Activated CD4-positive, alpha-beta T cell treated with anti-CD3 and anti-CD28 coated beads for 36 hours (primary cell): ENCODE measurements at regions of chrX and their contacts with region 1.

Region 1: GRCh38 chrX:16484350-16484749 is 165.6 kb upstream of the S100G start:
- DNase-seq: peak; percentile 58
- ATAC-seq: peak; percentile 99
- H3K4me3 Mint-ChIP-seq: no peak overlapping the region
- H3K27ac Mint-ChIP-seq: peak overlapping the region; percentile 72
- H3K4me1 Mint-ChIP-seq: peaks cover 31% of the 10 kb centered on the region
- H3K27me3 Mint-ChIP-seq: no peaks in the 10 kb centered on the region

Region 2: GRCh38 chrX:16528620-16529019 is 44.3 kb after region 1 on chrX:
- CTCF ChIA-PET with region 1: no interaction called
- POLR2A ChIA-PET with region 1: no interaction called
- intact Hi-C with region 1: loop called in 1 of 2 experiments (anchors 2 kb)
- DNase-seq: peak; percentile 62
- ATAC-seq: peak; percentile 88
- H3K4me3 Mint-ChIP-seq: peak overlapping the region; percentile 16
- H3K27ac Mint-ChIP-seq: peak overlapping the region; percentile 87
- H3K4me1 Mint-ChIP-seq: peaks cover 29% of the 10 kb centered on the region
- H3K27me3 Mint-ChIP-seq: no peaks in the 10 kb centered on the region

Region 3: DNA sequence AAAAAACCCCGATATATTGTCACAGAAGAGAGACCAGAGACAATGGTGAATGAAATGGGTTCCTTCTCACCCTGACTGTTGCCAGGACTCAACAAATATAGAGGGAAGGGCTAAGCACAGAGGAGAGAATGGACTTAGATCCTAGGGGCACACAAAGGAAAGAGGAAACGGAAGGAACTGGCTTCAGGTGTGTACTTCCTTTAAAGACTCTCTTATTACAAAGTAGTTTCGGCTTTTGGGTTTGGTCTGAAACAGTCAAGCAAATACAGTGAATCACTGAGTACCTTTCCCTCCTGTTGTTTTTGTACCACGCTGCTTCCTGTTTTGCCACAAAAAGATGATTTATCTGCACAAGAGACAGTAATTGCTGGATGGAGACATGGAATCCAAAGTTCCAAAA is 119.5 kb after region 1 on chrX:
- CTCF ChIA-PET with region 1: no interaction called
- POLR2A ChIA-PET with region 1: no interaction called
- intact Hi-C with region 1: loop called in 1 of 2 experiments (anchors 1 kb)
- DNase-seq: no peak
- ATAC-seq: peak; percentile 88
- H3K4me3 Mint-ChIP-seq: peak overlapping the region; percentile 2
- H3K27ac Mint-ChIP-seq: peak overlapping the region; percentile 76
- H3K4me1 Mint-ChIP-seq: peaks cover 22% of the 10 kb centered on the region
- H3K27me3 Mint-ChIP-seq: no peaks in the 10 kb centered on the region

Region 4: GRCh38 chrX:16712112-16712833 is 227.9 kb after region 1 on chrX and contains the start of gene CTPS2:
- CTCF ChIA-PET with region 1: no interaction called
- POLR2A ChIA-PET with region 1: no interaction called
- intact Hi-C with region 1: loop called in 1 of 2 experiments (anchors 5 kb)
- DNase-seq: peak; percentile 75
- ATAC-seq: peak; percentile 97
- H3K4me3 Mint-ChIP-seq: peak within 1 kb of the TSS; percentile 77
- H3K27ac Mint-ChIP-seq: peak within 1 kb of the TSS; percentile 82
- H3K4me1 Mint-ChIP-seq: peaks cover 10% of the 10 kb centered on the region
- H3K27me3 Mint-ChIP-seq: no peaks in the 10 kb centered on the region
- total RNA-seq, gene CTPS2: 6.8 to 7.2 TPM

Region 5: DNA sequence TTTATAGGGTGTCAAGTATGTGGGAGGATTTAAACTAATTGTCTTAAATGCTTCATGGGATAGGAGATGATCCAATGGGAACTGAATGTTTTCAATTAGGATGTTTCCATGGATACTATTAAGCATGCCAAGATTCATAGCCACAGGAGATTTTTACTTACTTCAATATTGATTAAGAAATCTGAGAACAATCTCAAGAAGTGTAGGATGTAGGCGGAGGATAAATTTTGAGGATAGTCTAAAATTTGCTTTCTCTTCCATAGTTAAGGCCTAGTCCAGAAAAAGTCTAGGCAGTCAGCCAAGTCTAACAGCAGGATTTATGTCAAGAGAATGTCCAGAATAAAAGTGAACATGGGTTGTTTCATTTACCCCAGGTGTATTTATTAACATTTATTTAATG is 494.9 kb after region 1 on chrX:
- CTCF ChIA-PET with region 1: no interaction called
- POLR2A ChIA-PET with region 1: no interaction called
- intact Hi-C with region 1: no loop called
- DNase-seq: no peak
- ATAC-seq: no peak
- H3K4me3 Mint-ChIP-seq: no peak overlapping the region
- H3K27ac Mint-ChIP-seq: no peak overlapping the region
- H3K4me1 Mint-ChIP-seq: no peaks in the 10 kb centered on the region
- H3K27me3 Mint-ChIP-seq: no peaks in the 10 kb centered on the region